Dorsolateral prefrontal cortex (tissue), 120 donors: ENCODE measurements at regions of chr5 and their contacts with region 1.

Region 1: DNA sequence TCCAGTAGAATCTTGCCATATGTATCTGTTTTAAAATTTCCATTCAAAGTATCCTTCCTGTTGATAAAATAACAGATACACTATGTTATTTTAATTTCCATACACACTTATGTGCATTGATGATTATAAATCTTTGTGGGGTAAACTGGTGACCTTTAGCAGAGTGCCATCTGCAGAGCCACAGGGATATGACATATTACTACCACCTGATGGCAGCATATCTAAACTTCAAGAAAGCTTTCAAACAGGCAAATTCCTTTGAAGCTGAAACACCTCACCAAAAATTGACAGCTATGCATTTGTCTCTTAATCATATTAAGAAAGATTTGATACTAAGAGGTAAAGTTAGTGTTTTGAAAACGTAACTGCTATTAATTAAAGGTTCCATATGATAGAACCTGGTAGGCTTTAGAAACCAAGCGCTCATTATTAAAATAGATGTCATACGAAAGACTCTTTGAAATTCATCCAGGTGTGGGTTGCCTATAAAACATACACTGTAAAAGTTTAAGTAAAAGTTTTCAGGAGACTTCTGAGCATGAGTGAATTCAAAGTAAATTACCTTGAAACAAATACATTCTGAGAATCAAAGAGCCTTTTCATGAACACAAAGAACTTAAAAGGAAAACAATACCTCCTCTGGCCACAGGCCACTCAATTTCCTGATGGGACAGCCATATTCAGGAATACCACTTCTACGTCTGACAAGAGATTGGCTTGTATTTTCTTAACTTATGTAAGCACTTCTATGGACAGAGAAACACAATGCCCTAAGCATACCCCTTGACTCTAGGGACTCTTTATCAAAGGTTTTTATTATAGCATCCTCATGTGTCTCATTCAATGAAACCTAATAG is 93.3 kb downstream of the KIAA0825 start:
- DNase-seq: peak in 1 of 10 donors; percentile 25
- H3K4me3 ChIP-seq: no peak overlapping the region
- H3K27ac ChIP-seq: no peak overlapping the region
- H3K27me3 ChIP-seq: no peaks in the 10 kb centered on the region
- CTCF ChIP-seq: peak; percentile 37 to 77 (median 61)

Region 2: DNA sequence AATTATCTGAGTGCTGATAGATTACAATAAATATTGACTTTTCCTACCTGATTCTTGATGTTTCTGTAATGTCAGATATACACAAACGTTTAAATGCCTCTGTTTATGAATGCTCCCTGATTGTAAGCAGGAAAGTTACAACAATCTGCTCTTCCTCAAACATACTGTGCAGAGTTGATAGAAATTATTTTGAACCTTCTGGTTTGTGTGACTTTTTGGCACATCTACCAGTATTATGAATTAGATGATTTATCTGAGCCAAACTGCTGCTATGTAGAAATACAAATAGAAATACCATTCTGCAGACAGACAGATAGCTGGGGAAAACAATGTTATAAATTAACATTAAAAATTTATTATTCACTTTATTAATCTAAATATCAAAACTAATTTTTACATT is 206.4 kb after region 1 on chr5:
- intact Hi-C with region 1: loop called in 1 of 2 experiments (anchors 10 kb)
- DNase-seq: no peak
- H3K4me3 ChIP-seq: no peak overlapping the region
- H3K27ac ChIP-seq: no peak overlapping the region
- H3K27me3 ChIP-seq: no peaks in the 10 kb centered on the region
- CTCF ChIP-seq: no peak

Region 3: GRCh38 chr5:94901191-94901979 is 376.3 kb after region 1 on chr5:
- intact Hi-C with region 1: loop called in 1 of 2 experiments (anchors 5 kb)
- DNase-seq: no peak
- H3K4me3 ChIP-seq: no peak overlapping the region
- H3K27ac ChIP-seq: no peak overlapping the region
- H3K27me3 ChIP-seq: no peaks in the 10 kb centered on the region
- CTCF ChIP-seq: no peak

Region 4: GRCh38 chr5:95043234-95043633 is 518.2 kb after region 1 on chr5:
- intact Hi-C with region 1: no loop called
- DNase-seq: no peak
- H3K4me3 ChIP-seq: no peak overlapping the region
- H3K27ac ChIP-seq: peak overlapping the region in 1 of 59 donors; percentile 22
- H3K27me3 ChIP-seq: no peaks in the 10 kb centered on the region
- CTCF ChIP-seq: no peak